ENCODE measurements at regions of chr4 and their contacts with region 1.

Region 1: DNA sequence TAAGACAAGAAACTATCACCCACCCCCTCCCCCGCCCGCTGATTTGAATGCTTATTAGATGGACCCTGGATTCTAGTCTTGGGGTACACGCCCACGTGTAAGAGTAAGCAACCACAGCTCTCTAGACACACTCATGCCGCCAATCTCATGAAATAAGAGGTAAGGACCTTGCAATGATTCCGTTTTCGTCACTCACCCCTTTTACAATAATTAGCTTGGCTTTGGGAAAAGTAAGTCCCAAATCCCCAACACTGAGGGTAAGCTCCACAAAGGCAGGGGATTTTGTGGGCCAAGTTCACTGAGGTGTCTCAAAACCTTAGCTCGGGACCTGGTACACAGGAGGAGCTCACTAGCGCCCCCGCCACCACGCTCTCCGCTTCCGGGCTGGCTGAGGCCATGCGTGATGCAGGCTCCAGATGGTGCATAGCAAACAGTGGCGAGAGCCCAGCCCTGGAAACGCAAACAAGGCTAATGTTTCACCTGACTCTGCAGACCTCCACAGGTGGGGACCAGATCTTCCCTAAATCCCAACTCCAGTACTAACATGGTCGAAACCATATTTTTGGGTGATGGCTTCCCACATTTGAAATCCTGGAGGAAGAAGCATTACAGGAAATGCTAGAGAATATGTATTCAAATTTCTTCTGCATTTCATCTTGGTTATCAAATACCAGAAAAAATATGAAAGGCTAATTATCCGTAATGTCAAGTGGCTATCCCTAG is 4.1 kb downstream of the PLAC8 start:
- DNase-seq: peak; percentile 81 to 89 (median 87)
- ATAC-seq: peak; percentile 88
- H3K4me3 ChIP-seq: peak overlapping the region; percentile 82
- H3K4me3 Mint-ChIP-seq: peak overlapping the region; percentile 94 to 99 (median 98)
- H3K27ac ChIP-seq: peak overlapping the region; percentile 88
- H3K27ac Mint-ChIP-seq: peak overlapping the region; percentile 92 to 99 (median 98)
- H3K4me1 ChIP-seq: peaks cover 24 to 35% of the 10 kb centered on the region in 2 donors
- H3K4me1 Mint-ChIP-seq: peaks cover 26 to 60% (median 45%) of the 10 kb centered on the region in 7 donors
- H3K27me3 ChIP-seq: no peaks in the 10 kb centered on the region
- H3K27me3 Mint-ChIP-seq: no peaks in the 10 kb centered on the region

Region 2: GRCh38 chr4:82462415-82462831 is 648.0 kb before region 1 on chr4:
- CTCF ChIA-PET with region 1: no interaction called
- POLR2A ChIA-PET with region 1: no interaction called
- intact Hi-C with region 1: loop called in 1 of 2 experiments (anchors 5 kb)
- DNase-seq: peak; percentile 60 to 83 (median 79)
- ATAC-seq: peak; percentile 96
- H3K4me3 ChIP-seq: no peak overlapping the region
- H3K4me3 Mint-ChIP-seq: no peak overlapping the region
- H3K27ac ChIP-seq: no peak overlapping the region
- H3K27ac Mint-ChIP-seq: peak overlapping the region in 1 of 9 donors; percentile 34
- H3K4me1 ChIP-seq: no peaks in the 10 kb centered on the region
- H3K4me1 Mint-ChIP-seq: peaks cover 0 to 5% (median 0%) of the 10 kb centered on the region in 7 donors
- H3K27me3 ChIP-seq: no peaks in the 10 kb centered on the region
- H3K27me3 Mint-ChIP-seq: no peaks in the 10 kb centered on the region

Region 3: DNA sequence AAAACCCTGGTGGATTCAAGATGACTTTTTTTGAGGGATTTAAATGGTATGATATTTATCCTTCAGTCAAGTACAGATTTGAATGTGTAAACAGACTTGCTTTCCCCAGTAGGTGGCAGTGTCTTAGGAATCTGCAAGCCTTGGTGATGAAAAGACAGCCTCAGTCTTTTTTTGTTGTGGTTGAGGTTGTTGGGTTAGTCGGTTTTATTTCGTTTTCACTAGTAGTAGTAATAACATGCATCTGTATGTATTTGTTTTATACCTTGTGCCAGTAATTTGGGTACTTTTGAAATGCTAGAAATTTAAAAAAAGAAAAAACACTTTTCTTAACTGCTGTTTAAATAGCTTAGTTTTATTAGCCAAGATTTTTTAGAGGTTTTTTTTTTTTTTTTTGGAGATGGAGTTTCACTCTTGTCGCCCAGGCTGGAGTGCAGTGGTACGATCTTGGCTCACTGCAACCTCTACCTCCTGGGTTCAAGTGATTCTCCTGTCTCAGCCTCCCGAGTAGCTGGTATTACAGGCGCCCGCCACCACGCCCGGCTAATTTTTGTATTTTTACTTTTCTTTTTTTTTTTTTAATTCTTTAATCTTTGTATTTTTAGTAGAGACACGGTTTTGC is 36.2 kb before region 1 on chr4:
- CTCF ChIA-PET with region 1: interaction called, 29 read pairs
- POLR2A ChIA-PET with region 1: interaction called, 15 read pairs
- intact Hi-C with region 1: loop called (anchors 1 kb)
- DNase-seq: peak in 8 of 9 donors; percentile 49 to 91 (median 85)
- ATAC-seq: peak; percentile 99
- H3K4me3 ChIP-seq: no peak overlapping the region
- H3K4me3 Mint-ChIP-seq: peak overlapping the region; percentile 43 to 85 (median 76)
- H3K27ac ChIP-seq: no peak overlapping the region
- H3K27ac Mint-ChIP-seq: peak overlapping the region; percentile 19 to 87 (median 79)
- H3K4me1 ChIP-seq: peaks cover 0 to 6% of the 10 kb centered on the region in 2 donors
- H3K4me1 Mint-ChIP-seq: peaks cover 8 to 28% (median 14%) of the 10 kb centered on the region in 7 donors
- H3K27me3 ChIP-seq: no peaks in the 10 kb centered on the region
- H3K27me3 Mint-ChIP-seq: no peaks in the 10 kb centered on the region

Region 4: DNA sequence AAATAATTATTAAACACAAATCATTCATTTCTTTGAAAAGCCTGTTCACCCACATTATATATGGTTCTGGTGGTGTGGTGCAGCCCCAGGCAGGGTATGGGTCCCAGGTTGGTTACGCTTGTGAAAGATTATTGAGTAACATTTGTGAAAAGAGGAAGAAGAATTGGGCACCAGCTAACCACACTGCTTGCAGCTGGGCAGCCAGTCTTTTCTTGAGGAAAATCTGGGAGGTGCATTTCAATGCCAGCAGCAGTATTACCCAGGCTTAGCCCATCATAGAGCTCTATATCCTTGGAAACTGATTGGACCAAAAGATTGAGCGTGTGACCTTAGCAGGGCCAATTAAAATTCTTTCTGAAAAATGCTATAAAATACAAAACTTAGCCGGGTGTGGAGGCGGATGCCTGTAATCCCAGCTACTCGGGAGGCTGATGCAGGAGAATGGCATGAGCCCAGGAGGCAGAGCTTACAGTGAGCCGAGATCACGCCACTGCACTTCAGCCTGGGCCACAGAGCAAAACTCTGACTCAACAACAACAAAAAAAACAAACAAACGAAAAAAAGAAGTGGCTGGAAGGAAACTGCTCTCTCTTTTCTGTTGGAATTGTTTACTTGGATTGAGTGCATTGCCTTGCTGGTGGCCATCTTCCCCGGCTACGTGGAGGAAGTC is 13.9 kb after region 1 on chr4:
- CTCF ChIA-PET with region 1: interaction called, 5 read pairs
- POLR2A ChIA-PET with region 1: interaction called, 38 read pairs
- intact Hi-C with region 1: loop called (anchors 1 to 2 kb)
- DNase-seq: no peak
- ATAC-seq: peak; percentile 68
- H3K4me3 ChIP-seq: no peak overlapping the region
- H3K4me3 Mint-ChIP-seq: peak overlapping the region in 2 of 10 donors; percentile 31 to 37
- H3K27ac ChIP-seq: no peak overlapping the region
- H3K27ac Mint-ChIP-seq: peak overlapping the region in 4 of 9 donors; percentile 5 to 75 (median 54)
- H3K4me1 ChIP-seq: peaks cover 0 to 10% of the 10 kb centered on the region in 2 donors
- H3K4me1 Mint-ChIP-seq: peaks cover 13 to 36% (median 21%) of the 10 kb centered on the region in 7 donors
- H3K27me3 ChIP-seq: no peaks in the 10 kb centered on the region
- H3K27me3 Mint-ChIP-seq: peaks cover 0 to 19% (median 0%) of the 10 kb centered on the region in 5 donors

Region 5: DNA sequence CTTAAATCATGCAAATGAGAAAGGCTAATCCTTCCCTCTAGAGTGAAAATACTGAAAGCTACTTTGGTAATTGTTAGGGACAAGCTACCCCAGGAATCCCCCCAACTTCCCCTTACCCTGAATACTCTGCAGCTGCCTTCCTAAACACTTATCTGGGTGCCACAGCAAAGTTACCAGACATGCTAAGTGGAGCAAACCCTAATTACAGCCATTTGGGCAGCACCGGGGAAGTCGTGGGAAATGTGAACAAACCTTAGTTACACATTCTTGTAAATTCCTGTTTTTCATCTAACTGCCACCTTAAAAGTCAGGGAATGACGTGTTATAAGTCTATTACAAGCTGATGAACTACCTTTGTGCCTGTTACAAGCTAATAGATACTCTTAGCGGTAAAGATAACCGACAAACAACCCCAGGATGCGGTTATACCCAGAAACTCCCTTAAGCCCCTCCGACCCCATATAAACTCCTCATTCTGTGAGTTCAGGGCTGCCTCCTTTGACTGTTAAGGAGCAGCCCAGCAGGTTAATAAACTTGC is 70.1 kb after region 1 on chr4:
- CTCF ChIA-PET with region 1: no interaction called
- POLR2A ChIA-PET with region 1: no interaction called
- intact Hi-C with region 1: no loop called
- DNase-seq: no peak
- ATAC-seq: no peak
- H3K4me3 ChIP-seq: no peak overlapping the region
- H3K4me3 Mint-ChIP-seq: no peak overlapping the region
- H3K27ac ChIP-seq: no peak overlapping the region
- H3K27ac Mint-ChIP-seq: no peak overlapping the region
- H3K4me1 ChIP-seq: no peaks in the 10 kb centered on the region
- H3K4me1 Mint-ChIP-seq: peaks cover 0 to 6% (median 2%) of the 10 kb centered on the region in 7 donors
- H3K27me3 ChIP-seq: no peaks in the 10 kb centered on the region
- H3K27me3 Mint-ChIP-seq: peaks cover 0 to 23% (median 0%) of the 10 kb centered on the region in 5 donors

Region 6: DNA sequence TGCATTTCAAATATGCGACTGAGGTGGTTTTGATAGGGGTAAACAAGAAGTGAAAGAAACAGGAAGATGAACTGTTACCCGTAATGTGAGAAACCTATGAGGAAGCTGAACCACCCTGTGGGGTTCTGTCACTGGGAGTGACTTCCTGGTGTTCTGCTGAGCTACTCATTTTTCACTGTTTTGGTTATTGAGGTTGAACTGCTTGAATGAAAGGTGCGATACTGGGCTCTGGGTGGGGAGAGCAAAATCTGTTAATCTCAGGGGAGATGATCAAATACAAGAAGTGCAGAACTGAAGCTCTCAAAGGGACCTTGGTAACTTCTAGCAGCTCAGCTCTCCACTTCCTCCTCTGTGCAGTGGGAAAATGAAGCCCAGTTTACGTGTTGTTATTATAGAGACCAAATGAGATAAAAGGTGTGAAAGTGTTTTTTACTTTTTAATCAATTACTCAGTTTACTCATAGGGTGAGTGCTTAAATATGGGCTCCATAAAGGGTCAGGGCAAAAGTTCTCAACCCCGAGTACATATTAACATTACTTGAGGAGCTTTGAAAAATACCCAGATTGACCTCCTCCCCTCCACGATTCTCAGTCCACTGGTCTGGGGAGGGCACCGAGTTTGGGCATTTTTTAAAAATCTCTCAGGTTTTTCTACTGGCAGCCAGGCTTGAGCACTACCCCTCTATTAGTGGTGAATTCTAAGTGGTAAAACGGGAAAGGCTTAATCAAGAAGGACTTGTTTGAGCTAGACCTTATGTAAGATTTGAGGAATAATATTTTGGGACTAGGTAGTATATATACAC is 107.5 kb after region 1 on chr4:
- CTCF ChIA-PET with region 1: interaction called, 16 read pairs
- POLR2A ChIA-PET with region 1: interaction called, 61 read pairs
- intact Hi-C with region 1: loop called (anchors 1 kb)
- DNase-seq: peak in 8 of 9 donors; percentile 52 to 91 (median 84)
- ATAC-seq: peak; percentile 95
- H3K4me3 ChIP-seq: peak overlapping the region; percentile 23
- H3K4me3 Mint-ChIP-seq: peak overlapping the region; percentile 57 to 84 (median 72)
- H3K27ac ChIP-seq: peak overlapping the region; percentile 78
- H3K27ac Mint-ChIP-seq: peak overlapping the region; percentile 88 to 96 (median 92)
- H3K4me1 ChIP-seq: peaks cover 65 to 77% of the 10 kb centered on the region in 2 donors
- H3K4me1 Mint-ChIP-seq: peaks cover 56 to 83% (median 74%) of the 10 kb centered on the region in 7 donors
- H3K27me3 ChIP-seq: no peaks in the 10 kb centered on the region
- H3K27me3 Mint-ChIP-seq: no peaks in the 10 kb centered on the region

Region 7: DNA sequence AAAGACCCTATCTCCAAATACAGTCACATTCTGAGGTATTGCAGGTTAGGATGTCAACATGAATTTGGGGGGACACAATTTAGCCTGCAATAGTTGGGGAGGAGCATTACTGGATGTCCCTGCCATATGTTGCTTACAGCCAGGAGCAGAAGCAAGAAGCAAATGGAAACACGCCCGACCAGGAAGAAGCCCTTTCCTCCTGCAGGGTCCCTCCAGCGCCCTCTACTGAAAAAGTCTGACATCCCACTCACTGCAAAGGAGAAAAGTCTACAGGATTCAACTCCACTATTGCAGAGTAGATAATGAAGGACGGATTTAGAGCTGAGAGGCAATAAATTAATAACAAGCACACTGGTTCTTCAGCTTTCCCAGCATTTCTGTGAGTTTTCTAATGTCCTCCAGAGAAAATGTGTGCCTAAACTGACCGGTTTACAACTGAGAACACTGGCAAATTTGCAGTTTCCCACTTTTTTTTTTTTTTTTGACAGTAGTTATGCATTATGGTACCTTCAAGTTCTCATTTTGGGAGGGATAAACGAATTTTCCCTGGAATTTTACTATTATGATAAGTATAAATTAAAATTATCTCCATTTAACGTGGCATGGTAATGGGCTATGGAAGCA is 142.5 kb after region 1 on chr4:
- CTCF ChIA-PET with region 1: interaction called, 48 read pairs
- POLR2A ChIA-PET with region 1: interaction called, 46 read pairs
- intact Hi-C with region 1: loop called (anchors 1 kb)
- DNase-seq: peak; percentile 36 to 85 (median 79)
- ATAC-seq: peak; percentile 90
- H3K4me3 ChIP-seq: no peak overlapping the region
- H3K4me3 Mint-ChIP-seq: no peak overlapping the region
- H3K27ac ChIP-seq: no peak overlapping the region
- H3K27ac Mint-ChIP-seq: peak overlapping the region in 8 of 9 donors; percentile 8 to 88 (median 72)
- H3K4me1 ChIP-seq: peaks cover 10 to 12% of the 10 kb centered on the region in 2 donors
- H3K4me1 Mint-ChIP-seq: peaks cover 19 to 36% (median 26%) of the 10 kb centered on the region in 7 donors
- H3K27me3 ChIP-seq: no peaks in the 10 kb centered on the region
- H3K27me3 Mint-ChIP-seq: peaks cover 0 to 5% (median 0%) of the 10 kb centered on the region in 5 donors

Region 8: DNA sequence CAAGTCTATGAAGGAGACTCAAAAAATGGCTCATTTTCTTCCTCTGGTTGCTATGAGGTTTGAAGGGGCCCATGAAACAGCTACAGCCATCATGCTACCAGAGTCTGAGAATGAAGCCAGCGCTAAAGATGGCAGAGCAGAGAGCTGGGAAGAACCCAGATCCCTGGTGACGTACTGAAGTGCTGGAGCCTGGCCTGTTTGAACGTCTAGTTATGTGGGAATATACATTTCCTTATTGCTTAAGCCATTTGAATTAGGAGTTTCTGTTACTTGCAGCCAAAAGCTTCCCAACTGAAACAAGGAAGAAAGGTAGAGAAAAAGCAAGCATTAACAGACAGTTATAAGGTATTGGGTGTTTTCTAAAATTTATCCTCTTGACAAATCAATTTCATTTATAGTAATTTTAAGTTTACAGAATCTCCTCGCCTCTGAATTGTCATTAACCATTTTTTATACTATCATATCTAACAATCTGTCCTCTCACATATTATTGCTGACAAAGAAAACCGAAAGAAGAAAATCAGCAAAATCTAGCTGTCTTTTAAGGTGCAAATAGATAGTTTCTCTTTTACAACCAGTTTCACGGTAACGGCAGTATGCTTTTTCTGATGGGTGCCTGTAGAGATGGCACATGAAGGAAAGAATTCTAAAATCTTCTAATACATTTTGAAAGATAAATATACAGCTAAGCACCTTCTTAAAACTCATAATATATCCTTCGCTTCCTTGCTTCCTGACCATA is 183.1 kb after region 1 on chr4:
- CTCF ChIA-PET with region 1: no interaction called
- POLR2A ChIA-PET with region 1: no interaction called
- intact Hi-C with region 1: no loop called
- DNase-seq: no peak
- ATAC-seq: no peak
- H3K4me3 ChIP-seq: no peak overlapping the region
- H3K4me3 Mint-ChIP-seq: no peak overlapping the region
- H3K27ac ChIP-seq: no peak overlapping the region
- H3K27ac Mint-ChIP-seq: no peak overlapping the region
- H3K4me1 ChIP-seq: peaks cover 0 to 14% of the 10 kb centered on the region in 2 donors
- H3K4me1 Mint-ChIP-seq: peaks cover 7 to 15% (median 8%) of the 10 kb centered on the region in 7 donors
- H3K27me3 ChIP-seq: no peaks in the 10 kb centered on the region
- H3K27me3 Mint-ChIP-seq: peaks cover 0 to 3% (median 0%) of the 10 kb centered on the region in 5 donors

Region 9: DNA sequence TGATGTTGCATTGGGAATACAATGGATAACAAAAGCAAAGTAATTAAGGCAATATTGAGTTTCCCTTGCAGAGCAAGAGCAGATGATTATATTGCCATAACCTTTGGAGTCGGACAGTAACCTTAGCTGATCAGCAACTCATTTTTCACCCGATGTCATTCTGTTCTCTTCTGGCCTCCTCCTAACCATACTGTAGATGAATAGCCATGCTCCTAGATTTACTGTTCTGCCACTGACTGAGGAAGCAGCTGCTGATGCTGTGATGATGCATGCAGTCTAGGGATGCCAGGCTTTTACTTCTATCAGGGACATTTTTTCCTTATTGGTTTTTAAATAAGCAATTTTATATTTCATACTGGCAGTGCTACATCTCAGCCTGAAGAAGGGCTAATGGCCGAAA is 869.4 kb after region 1 on chr4:
- CTCF ChIA-PET with region 1: no interaction called
- POLR2A ChIA-PET with region 1: no interaction called
- intact Hi-C with region 1: no loop called
- DNase-seq: no peak
- ATAC-seq: no peak
- H3K4me3 ChIP-seq: no peak overlapping the region
- H3K4me3 Mint-ChIP-seq: no peak overlapping the region
- H3K27ac ChIP-seq: no peak overlapping the region
- H3K27ac Mint-ChIP-seq: no peak overlapping the region
- H3K4me1 ChIP-seq: no peaks in the 10 kb centered on the region
- H3K4me1 Mint-ChIP-seq: no peaks in the 10 kb centered on the region
- H3K27me3 ChIP-seq: no peaks in the 10 kb centered on the region
- H3K27me3 Mint-ChIP-seq: peaks cover 0 to 10% (median 2%) of the 10 kb centered on the region in 5 donors

Measured in naive thymus-derived CD4-positive, alpha-beta T cell (primary cell).